Endothelial cell of umbilical vein (primary cell): ENCODE measurements at regions of chr4 and their contacts with region 1.

Region 1: DNA sequence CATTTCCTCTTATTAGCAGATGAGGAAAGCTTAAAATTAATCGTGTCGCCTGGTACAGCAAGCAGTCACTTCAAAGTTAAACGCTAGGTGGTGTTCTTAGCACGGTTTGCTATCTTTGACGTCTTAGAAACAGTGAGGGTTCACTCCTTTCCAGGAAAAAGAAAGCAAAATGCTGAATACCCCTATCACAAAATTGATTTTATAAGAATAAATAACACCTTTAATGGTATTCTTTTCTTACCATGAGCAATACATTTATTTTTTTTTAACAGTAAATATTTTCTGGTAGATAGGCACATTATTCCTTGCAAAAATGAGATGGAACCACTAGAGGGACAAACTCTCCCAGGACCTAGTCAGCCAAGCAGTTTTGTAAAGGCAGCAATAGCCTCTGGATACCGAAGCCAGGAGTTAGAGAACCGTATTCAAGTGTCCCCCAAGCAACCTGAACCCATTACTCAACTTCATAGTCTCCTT is 153.9 kb downstream of the KDR start:
- DNase-seq: peak; percentile 77
- H3K4me3 ChIP-seq: no peak overlapping the region
- H3K27ac ChIP-seq: no peak overlapping the region
- H3K4me1 ChIP-seq: no peaks in the 10 kb centered on the region
- H3K27me3 ChIP-seq: peaks cover 0 to 2% of the 10 kb centered on the region in 2 experiments
- CTCF ChIP-seq: peak; percentile 46 to 52
- POLR2A ChIP-seq: no peak

Region 2: DNA sequence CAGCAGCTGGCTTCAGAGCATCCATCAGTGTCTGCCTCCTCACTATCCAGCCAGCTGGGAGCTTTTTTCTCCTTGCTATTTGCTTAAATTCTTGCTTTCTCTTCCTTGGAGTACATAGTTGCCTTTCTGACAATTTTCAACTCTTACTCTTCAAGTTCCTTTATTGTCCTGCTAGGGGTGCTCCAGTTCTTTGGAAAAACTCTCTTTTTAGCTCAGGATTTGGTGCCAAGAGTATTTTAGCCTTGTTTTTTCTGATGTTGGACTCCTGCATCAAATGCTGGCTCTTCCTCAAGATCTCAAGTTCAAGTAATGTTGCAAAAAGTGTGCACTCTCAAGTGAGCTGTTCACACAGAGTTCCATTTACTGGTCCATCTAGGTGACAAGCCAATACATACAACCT is 27.5 kb after region 1 on chr4:
- CTCF ChIA-PET with region 1: interaction called, 14 read pairs
- POLR2A ChIA-PET with region 1: no interaction called
- dilution Hi-C with region 1: no loop called
- intact Hi-C with region 1: no loop called
- DNase-seq: peak; percentile 65
- H3K4me3 ChIP-seq: no peak overlapping the region
- H3K27ac ChIP-seq: no peak overlapping the region
- H3K4me1 ChIP-seq: no peaks in the 10 kb centered on the region
- H3K27me3 ChIP-seq: peaks cover 0 to 2% of the 10 kb centered on the region in 2 experiments
- CTCF ChIP-seq: peak; percentile 34 to 43
- POLR2A ChIP-seq: no peak

Region 3: DNA sequence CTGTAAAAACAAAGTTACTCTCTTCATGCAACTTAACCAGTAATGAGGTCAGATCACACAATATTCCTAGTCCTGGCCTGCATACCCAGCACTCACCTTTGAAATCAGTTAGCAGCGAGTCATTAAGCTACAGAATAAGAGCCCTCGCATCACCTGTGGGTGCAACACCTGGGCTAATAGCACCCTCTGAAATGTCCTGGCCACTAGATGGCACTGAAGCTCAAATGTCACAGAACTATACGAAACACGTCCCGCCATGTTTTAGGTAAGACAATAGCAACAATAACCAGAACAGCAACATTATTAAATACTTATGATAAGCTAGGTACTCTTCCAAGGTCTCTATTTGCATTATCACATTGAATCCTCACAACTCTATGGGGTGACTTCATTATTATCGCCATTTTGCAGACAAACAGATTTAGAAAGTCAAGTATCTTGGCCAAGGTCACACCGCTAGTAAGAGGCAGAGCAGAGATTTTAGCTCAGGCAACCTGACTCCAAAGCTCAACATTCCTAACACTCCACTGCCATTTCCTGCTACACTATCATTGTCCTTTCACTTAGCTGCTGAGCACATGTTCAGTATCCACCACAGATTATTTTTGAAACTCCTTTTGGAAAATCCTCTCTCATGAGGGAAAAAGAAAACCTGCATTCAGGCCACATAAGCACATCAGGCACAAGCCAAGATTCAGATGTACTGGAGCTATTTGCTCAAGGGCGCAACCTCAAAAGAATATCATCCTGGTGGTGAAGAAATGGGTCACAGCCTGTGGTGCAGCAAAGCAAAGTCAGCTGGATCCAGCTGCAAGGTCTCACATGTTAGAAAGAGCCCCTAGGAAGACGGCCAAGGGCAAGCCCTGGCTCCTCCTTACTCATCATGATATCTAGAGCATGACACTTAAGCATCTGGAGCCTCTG is 213.3 kb after region 1 on chr4:
- CTCF ChIA-PET with region 1: interaction called, 6 read pairs
- POLR2A ChIA-PET with region 1: no interaction called
- dilution Hi-C with region 1: no loop called
- intact Hi-C with region 1: loop called (anchors 10 kb)
- DNase-seq: no peak
- H3K4me3 ChIP-seq: no peak overlapping the region
- H3K27ac ChIP-seq: peak overlapping the region; percentile 63
- H3K4me1 ChIP-seq: peaks cover 64% of the 10 kb centered on the region
- H3K27me3 ChIP-seq: no peaks in the 10 kb centered on the region
- CTCF ChIP-seq: peak in 1 of 2 donors; percentile 30
- POLR2A ChIP-seq: no peak

Region 4: GRCh38 chr4:55395529-55396307 is 424.2 kb after region 1 on chr4 and contains the start of gene TMEM165:
- CTCF ChIA-PET with region 1: interaction called, 10 read pairs
- POLR2A ChIA-PET with region 1: no interaction called
- dilution Hi-C with region 1: no loop called
- intact Hi-C with region 1: loop called (anchors 1 kb)
- DNase-seq: peak; percentile 88
- H3K4me3 ChIP-seq: peak within 1 kb of the TSS; percentile 89 to 98 (median 91)
- H3K27ac ChIP-seq: peak within 1 kb of the TSS; percentile 79
- H3K4me1 ChIP-seq: peaks cover 19% of the 10 kb centered on the region
- H3K27me3 ChIP-seq: no peaks in the 10 kb centered on the region
- CTCF ChIP-seq: no peak
- POLR2A ChIP-seq: peak; percentile 97
- total RNA-seq, gene TMEM165: 159 and 177 TPM in 2 replicates

Region 5: DNA sequence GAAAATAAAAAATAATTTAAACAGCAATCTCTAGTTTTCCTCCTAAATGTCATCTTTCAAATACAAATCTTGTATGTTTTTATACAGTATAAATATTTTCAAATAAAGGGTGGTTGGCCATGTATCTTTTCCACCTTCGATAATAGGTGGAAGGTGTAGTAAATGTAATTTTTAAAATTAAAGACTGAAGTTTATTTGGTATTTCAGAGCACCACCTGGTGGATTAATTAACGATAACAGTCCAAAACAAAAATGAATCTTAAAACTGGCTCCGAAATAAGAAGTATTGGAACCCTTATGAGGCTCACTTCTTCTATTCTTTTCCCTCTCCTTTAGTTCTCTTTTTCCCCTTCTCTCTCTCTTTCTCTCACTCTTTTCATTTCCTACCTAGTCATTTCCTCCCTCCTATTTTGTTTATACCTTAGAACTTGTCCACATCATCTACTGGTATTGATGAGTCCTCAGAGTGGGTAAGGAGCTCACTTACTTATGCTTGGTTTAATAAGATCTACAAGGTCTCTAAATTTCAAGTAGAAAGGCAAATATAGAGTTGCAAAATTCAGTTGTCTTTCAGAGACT is 765.2 kb after region 1 on chr4:
- CTCF ChIA-PET with region 1: interaction called, 12 read pairs
- POLR2A ChIA-PET with region 1: no interaction called
- dilution Hi-C with region 1: no loop called
- intact Hi-C with region 1: loop called (anchors 5 kb)
- DNase-seq: peak; percentile 23
- H3K4me3 ChIP-seq: no peak overlapping the region
- H3K27ac ChIP-seq: no peak overlapping the region
- H3K4me1 ChIP-seq: no peaks in the 10 kb centered on the region
- H3K27me3 ChIP-seq: peaks cover 0 to 2% of the 10 kb centered on the region in 2 experiments
- CTCF ChIP-seq: peak; percentile 7 to 11
- POLR2A ChIP-seq: no peak